HCT116 (cell line): ENCODE measurements at regions of chr7 and their contacts with region 1.

Region 1: GRCh38 chr7:41940760-41941343 is 238.0 kb upstream of the INHBA start:
- DNase-seq: peak; percentile 32
- ATAC-seq: peak; percentile 84
- H3K4me3 ChIP-seq: no peak overlapping the region
- H3K27ac ChIP-seq: no peak overlapping the region
- H3K4me1 ChIP-seq: no peaks in the 10 kb centered on the region
- H3K27me3 ChIP-seq: no peaks in the 10 kb centered on the region; the same call in 1 of the 2 replicates
- CTCF ChIP-seq: peak; percentile 55 to 87 (median 85); a peak in 5 of 6 replicates
- POLR2A ChIP-seq: no peak
- RAD21 ChIP-seq: peak; percentile 68

Region 2: DNA sequence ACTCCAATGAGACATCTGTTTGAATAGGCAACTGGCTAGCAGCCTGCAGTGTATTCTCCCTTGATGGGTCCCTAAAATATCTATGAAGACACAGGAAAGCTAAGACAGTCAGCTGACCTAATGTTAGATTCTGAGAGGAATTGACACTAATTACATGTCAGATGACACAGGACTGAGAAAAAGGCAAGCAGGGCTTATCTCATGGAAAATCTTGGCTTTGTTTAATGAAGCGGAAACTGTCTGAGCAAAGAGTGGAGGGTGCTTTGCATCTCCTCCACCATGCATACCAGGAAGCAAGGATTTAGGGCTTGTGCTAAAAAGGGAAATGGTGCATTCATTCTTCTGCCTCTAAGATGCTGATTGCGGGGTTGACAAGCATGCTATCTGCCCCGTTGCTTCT is 431.6 kb after region 1 on chr7:
- CTCF ChIA-PET with region 1: no interaction called
- POLR2A ChIA-PET with region 1: no interaction called
- RAD21 ChIA-PET with region 1: no interaction called
- intact Hi-C with region 1: no loop called
- DNase-seq: no peak
- ATAC-seq: no peak
- H3K4me3 ChIP-seq: no peak overlapping the region
- H3K27ac ChIP-seq: no peak overlapping the region
- H3K4me1 ChIP-seq: no peaks in the 10 kb centered on the region
- H3K27me3 ChIP-seq: no peaks in the 10 kb centered on the region
- CTCF ChIP-seq: no peak
- POLR2A ChIP-seq: no peak
- RAD21 ChIP-seq: no peak

Region 3: DNA sequence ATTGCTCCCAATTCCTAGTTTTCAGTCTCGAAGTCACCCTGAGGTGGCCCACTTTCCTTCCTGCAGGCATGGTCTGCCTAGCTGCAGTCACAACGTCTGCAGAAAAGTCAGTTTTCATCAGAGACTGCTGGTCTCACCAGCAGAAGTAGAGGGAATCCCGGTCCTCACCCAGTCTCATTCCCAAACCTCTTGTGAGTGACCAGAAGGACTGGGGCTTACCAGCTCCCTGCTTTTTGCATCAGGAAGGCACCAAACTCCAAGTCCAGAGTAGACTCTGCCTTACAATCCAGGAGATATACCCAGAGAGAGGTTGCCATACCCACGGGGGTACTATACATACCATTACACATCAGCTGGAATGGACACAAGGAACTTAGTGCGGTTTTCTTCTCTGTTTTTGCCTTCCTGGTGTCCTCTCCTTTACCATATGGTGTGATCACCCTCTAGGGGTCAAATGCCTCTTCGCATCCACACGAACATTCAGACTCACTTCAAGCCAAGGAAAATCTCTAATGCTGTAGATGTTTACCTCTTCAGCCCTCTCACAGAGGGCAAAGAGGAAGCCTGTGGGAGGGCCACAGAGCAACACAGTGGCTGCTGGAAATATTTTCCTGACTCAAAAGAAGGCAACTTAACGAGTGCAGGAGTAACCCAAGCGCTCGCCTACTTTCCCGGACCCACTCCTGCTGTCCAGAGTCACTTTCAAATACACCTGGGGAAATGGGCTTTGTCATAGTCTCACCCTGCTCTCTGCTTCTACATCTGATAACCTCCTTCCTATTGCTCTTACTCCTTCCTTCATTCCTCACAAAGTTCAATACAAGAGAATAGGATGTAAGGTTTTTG is 750.2 kb after region 1 on chr7:
- CTCF ChIA-PET with region 1: interaction called, 7 read pairs
- POLR2A ChIA-PET with region 1: no interaction called
- RAD21 ChIA-PET with region 1: no interaction called
- intact Hi-C with region 1: loop called (anchors 2 kb)
- DNase-seq: peak; percentile 10
- ATAC-seq: peak; percentile 64
- H3K4me3 ChIP-seq: no peak overlapping the region
- H3K27ac ChIP-seq: no peak overlapping the region
- H3K4me1 ChIP-seq: no peaks in the 10 kb centered on the region
- H3K27me3 ChIP-seq: no peaks in the 10 kb centered on the region; the same call in 1 of the 2 replicates
- CTCF ChIP-seq: peak in 2 of 3 experiments; percentile 34 to 47; a peak in 4 of 6 replicates
- POLR2A ChIP-seq: no peak
- RAD21 ChIP-seq: peak; percentile 50

Region 4: GRCh38 chr7:42843205-42843800 is 902.5 kb after region 1 on chr7:
- CTCF ChIA-PET with region 1: interaction called, 19 read pairs
- POLR2A ChIA-PET with region 1: no interaction called
- RAD21 ChIA-PET with region 1: interaction called in 1 of 2 experiments, 5 read pairs
- intact Hi-C with region 1: loop called (anchors 2 kb)
- DNase-seq: peak; percentile 8
- ATAC-seq: peak; percentile 96
- H3K4me3 ChIP-seq: no peak overlapping the region
- H3K27ac ChIP-seq: no peak overlapping the region
- H3K4me1 ChIP-seq: no peaks in the 10 kb centered on the region
- H3K27me3 ChIP-seq: peaks cover 26% of the 10 kb centered on the region; the same call in 1 of the 2 replicates
- CTCF ChIP-seq: peak; percentile 43 to 47 (median 44); a peak in 5 of 6 replicates
- POLR2A ChIP-seq: no peak
- RAD21 ChIP-seq: peak; percentile 65

Region 5: DNA sequence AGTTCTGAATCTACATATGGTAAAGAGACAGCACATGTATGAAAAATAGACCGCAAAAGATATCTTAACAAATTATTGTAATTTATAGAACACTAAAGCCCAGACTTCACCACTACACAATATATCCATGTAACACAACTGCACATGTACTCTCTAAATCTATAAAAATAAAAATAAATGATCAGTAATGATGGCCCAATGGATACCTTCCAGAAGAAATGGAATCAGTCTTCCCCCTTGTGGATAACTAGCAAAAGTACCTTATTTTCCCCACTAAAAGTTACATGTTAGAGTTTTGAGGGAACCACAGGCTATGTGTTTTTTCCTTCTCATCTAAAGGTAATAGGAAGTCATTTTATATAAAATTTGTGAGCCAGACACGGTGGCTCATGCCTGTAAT is 945.3 kb after region 1 on chr7:
- CTCF ChIA-PET with region 1: interaction called, 14 read pairs
- POLR2A ChIA-PET with region 1: no interaction called
- RAD21 ChIA-PET with region 1: no interaction called
- intact Hi-C with region 1: no loop called
- DNase-seq: no peak
- ATAC-seq: peak; percentile 63
- H3K4me3 ChIP-seq: no peak overlapping the region
- H3K27ac ChIP-seq: no peak overlapping the region
- H3K4me1 ChIP-seq: no peaks in the 10 kb centered on the region
- H3K27me3 ChIP-seq: no peaks in the 10 kb centered on the region; the same call in 1 of the 2 replicates
- CTCF ChIP-seq: peak; percentile 32 to 48 (median 41); a peak in 5 of 6 replicates
- POLR2A ChIP-seq: no peak
- RAD21 ChIP-seq: peak; percentile 57; the same call in 1 of the 2 replicates

Region 6: DNA sequence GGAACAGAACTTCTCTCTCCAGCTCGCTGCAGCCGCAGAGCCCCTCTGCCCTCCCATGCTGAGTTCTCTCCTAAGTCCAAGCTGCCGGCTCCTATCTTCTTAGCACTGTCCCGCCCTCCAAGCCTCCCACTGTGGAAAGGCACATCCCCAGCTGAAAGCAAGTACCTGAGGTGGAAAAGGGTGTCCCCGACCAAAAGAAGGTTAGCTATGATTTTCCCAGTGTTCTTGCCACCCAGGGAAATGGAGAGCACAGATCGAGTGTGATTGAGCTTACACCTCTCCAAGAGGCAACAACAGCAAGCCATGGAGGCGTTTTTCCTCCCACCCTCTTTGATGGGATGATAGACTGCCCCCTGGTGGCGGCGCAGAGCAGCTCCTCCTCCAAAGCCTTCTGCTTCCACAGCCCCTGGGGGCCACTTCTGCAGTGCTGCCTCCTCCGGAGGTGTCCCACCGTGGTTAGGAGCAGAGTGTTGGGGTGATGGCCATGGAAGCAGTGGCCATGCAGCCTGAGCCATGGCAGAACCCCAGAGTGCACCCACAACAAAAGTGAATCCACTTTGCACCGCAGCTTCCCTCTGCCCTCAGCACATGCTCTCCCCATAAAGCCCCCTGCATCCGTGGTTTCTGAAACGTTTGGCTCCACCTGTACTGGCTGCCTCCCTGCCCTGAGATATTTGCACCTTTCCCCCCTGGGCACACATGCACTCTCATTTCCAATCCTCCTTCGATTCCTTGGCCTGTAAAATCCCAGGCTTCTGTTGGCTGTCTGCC is 1499.0 kb after region 1 on chr7:
- CTCF ChIA-PET with region 1: interaction called, 11 read pairs
- POLR2A ChIA-PET with region 1: no interaction called
- RAD21 ChIA-PET with region 1: no interaction called
- intact Hi-C with region 1: no loop called
- DNase-seq: peak; percentile 38
- ATAC-seq: peak; percentile 99
- H3K4me3 ChIP-seq: no peak overlapping the region
- H3K27ac ChIP-seq: no peak overlapping the region
- H3K4me1 ChIP-seq: no peaks in the 10 kb centered on the region
- H3K27me3 ChIP-seq: no peaks in the 10 kb centered on the region
- CTCF ChIP-seq: peak; percentile 60 to 94 (median 91)
- POLR2A ChIP-seq: no peak
- RAD21 ChIP-seq: peak; percentile 69

Region 7: GRCh38 chr7:43834463-43835251 is 1893.8 kb after region 1 on chr7:
- CTCF ChIA-PET with region 1: interaction called, 3 read pairs
- POLR2A ChIA-PET with region 1: no interaction called
- RAD21 ChIA-PET with region 1: no interaction called
- intact Hi-C with region 1: loop called (anchors 2 kb)
- DNase-seq: no peak
- ATAC-seq: no peak
- H3K4me3 ChIP-seq: no peak overlapping the region
- H3K27ac ChIP-seq: no peak overlapping the region
- H3K4me1 ChIP-seq: peaks cover 0 to 24% of the 10 kb centered on the region in 2 experiments; a peak in 2 of 4 replicates
- H3K27me3 ChIP-seq: no peaks in the 10 kb centered on the region
- CTCF ChIP-seq: no peak
- POLR2A ChIP-seq: no peak
- RAD21 ChIP-seq: no peak